ENCODE measurements at regions of chr7 and their contacts with region 1.

Region 1: DNA sequence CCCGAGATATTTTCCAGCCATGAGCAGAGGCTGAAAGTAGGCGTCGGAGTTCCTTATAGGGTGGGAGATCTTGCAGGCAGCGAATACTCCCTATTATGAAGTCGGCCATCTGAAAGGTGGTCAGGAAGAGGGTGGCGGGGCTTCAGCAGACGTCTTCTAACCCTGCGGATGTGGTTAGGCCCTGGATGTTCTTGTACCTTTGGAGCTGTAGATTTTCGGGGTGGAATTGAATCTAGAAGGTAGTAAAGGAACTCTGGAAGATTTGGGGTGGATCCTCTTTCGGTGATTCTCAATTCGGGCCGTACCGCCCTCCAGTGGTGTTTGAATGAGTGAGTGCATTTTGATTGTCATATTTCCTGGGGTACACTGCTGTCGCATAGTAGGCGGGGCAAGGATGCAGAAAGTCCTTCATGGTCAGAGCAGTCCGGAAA is 635 bp downstream of the NUP205 start:
- DNase-seq: peak; percentile 43 to 63
- ATAC-seq: peak; percentile 65 to 85 (median 72)
- H3K4me3 ChIP-seq: peak overlapping the region; percentile 94
- H3K27ac ChIP-seq: peak overlapping the region; percentile 98
- H3K4me1 ChIP-seq: peaks cover 8% of the 10 kb centered on the region
- H3K27me3 ChIP-seq: no peaks in the 10 kb centered on the region
- CTCF ChIP-seq: peak; percentile 53

Region 2: DNA sequence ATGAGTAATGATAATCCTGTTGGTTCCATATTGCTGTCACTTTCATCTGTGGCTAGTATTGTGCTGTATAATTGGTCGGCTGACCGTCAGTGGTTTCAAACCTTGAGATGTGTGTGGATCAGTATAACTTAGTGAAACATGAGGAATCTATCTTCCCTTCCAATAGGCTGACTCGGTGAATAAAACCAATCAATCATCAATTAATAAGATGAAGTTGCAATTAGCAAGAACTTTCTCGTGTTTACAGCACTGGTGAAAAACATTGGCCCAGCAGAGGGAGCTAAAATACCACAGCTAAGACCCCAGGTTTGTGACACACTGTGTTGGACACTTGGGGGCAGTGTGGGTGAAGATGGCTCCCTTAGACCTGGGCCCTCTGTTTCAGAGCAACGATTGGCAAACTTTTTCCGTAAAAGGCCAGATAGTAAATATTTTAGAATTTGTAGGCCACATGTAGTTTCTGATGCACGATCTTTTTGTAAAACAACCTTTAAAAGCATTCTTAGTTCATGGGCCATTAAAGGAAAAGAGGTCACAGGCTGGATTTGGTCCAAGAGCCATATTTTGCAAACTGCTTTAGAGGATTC is 276.9 kb before region 1 on chr7:
- intact Hi-C with region 1: loop called (anchors 2 to 5 kb)
- DNase-seq: peak; percentile 69 to 79
- ATAC-seq: peak; percentile 94 to 99 (median 98)
- H3K4me3 ChIP-seq: no peak overlapping the region
- H3K27ac ChIP-seq: no peak overlapping the region
- H3K4me1 ChIP-seq: peaks cover 22% of the 10 kb centered on the region
- H3K27me3 ChIP-seq: no peaks in the 10 kb centered on the region
- CTCF ChIP-seq: peak; percentile 94

Region 3: DNA sequence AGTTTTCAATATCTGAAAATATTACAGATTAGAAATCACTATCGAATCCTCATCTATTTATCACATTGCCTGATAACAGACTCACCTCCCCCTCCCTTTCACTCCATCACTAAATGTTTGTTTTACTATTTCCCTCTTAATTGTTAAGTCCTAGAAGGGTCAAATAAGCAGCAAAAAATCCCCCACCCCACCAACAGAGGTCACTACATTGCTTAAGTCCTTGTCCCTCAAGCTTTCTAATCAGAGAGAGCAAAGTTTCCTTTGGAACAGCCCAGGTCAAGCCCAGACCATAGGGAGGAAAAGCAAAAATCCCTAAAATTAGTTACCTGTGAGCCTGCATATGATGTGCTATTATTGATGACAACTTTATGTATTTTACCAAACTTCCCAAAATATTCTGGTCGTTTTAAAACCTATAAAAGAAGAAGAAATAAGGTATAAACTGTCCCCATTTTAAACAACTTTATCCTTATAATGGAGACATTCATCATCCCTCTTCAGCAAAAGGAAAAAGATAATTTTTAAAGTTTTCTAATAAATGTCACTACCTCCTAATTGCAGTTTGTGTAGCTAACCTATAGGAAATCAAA is 143.4 kb before region 1 on chr7:
- intact Hi-C with region 1: loop called (anchors 10 kb)
- DNase-seq: no peak
- ATAC-seq: peak in 2 of 4 donors; percentile 50 to 65
- H3K4me3 ChIP-seq: no peak overlapping the region
- H3K27ac ChIP-seq: no peak overlapping the region
- H3K4me1 ChIP-seq: peaks cover 3% of the 10 kb centered on the region
- H3K27me3 ChIP-seq: no peaks in the 10 kb centered on the region
- CTCF ChIP-seq: peak; percentile 42

Region 4: DNA sequence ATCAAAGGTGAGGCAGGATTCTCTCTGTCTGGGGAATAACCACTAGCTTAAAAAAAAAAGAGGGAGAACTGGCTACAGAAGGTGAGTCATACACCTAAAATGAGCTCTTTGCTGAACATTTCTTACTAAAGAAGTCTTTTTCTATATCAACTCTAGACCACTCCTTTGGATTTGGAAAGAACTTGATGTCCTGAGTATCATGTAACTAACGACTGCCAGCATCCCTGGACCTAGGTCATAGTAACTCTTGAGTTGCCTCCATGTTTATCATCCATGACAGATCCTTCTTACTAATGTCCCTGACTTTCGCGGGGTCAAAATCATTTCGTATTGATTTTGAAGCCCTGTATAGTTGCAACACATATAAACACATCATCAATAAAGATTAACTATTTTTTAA is 137.6 kb before region 1 on chr7:
- intact Hi-C with region 1: loop called (anchors 10 kb)
- DNase-seq: no peak
- ATAC-seq: peak in 1 of 4 donors; percentile 63
- H3K4me3 ChIP-seq: no peak overlapping the region
- H3K27ac ChIP-seq: no peak overlapping the region
- H3K4me1 ChIP-seq: no peaks in the 10 kb centered on the region
- H3K27me3 ChIP-seq: no peaks in the 10 kb centered on the region
- CTCF ChIP-seq: no peak

Region 5: GRCh38 chr7:135509903-135510602 is 48.3 kb before region 1 on chr7 and contains the start of gene CNOT4:
- intact Hi-C with region 1: loop called (anchors 2 to 5 kb)
- DNase-seq: peak; percentile 97 to 98
- ATAC-seq: peak; percentile 97 to 99 (median 98)
- H3K4me3 ChIP-seq: peak within 1 kb of the TSS; percentile 94
- H3K27ac ChIP-seq: peak within 1 kb of the TSS; percentile 94
- H3K4me1 ChIP-seq: peaks cover 22% of the 10 kb centered on the region
- H3K27me3 ChIP-seq: no peaks in the 10 kb centered on the region
- CTCF ChIP-seq: no peak
- total RNA-seq, gene CNOT4: 27.6 to 43.7 (median 33.5) TPM

Region 6: GRCh38 chr7:135616136-135616535 is 57.8 kb after region 1 on chr7:
- intact Hi-C with region 1: no loop called
- DNase-seq: no peak
- ATAC-seq: no peak
- H3K4me3 ChIP-seq: no peak overlapping the region
- H3K27ac ChIP-seq: no peak overlapping the region
- H3K4me1 ChIP-seq: no peaks in the 10 kb centered on the region
- H3K27me3 ChIP-seq: no peaks in the 10 kb centered on the region
- CTCF ChIP-seq: no peak

Measured in psoas muscle (tissue), 8 donors.